Colonic mucosa (tissue), 4 donors: ENCODE measurements at regions of chr14 and their contacts with region 1.

Region 1: GRCh38 chr14:94354638-94355185 is 31.6 kb upstream of the SERPINA6 start:
- DNase-seq: no peak
- H3K4me3 ChIP-seq: no peak overlapping the region
- H3K27ac ChIP-seq: no peak overlapping the region
- H3K4me1 ChIP-seq: no peaks in the 10 kb centered on the region
- H3K27me3 ChIP-seq: no peaks in the 10 kb centered on the region
- CTCF ChIP-seq: no peak

Region 2: GRCh38 chr14:94412671-94413638 is 58.2 kb after region 1 on chr14:
- intact Hi-C with region 1: loop called (anchors 5 kb)
- DNase-seq: no peak
- H3K4me3 ChIP-seq: no peak overlapping the region
- H3K27ac ChIP-seq: no peak overlapping the region
- H3K4me1 ChIP-seq: peaks cover 3% of the 10 kb centered on the region
- H3K27me3 ChIP-seq: no peaks in the 10 kb centered on the region
- CTCF ChIP-seq: peak; percentile 26

Region 3: GRCh38 chr14:94485944-94486841 is 131.5 kb after region 1 on chr14:
- intact Hi-C with region 1: loop called (anchors 5 kb)
- DNase-seq: peak; percentile 28
- H3K4me3 ChIP-seq: no peak overlapping the region
- H3K27ac ChIP-seq: no peak overlapping the region
- H3K4me1 ChIP-seq: no peaks in the 10 kb centered on the region
- H3K27me3 ChIP-seq: no peaks in the 10 kb centered on the region
- CTCF ChIP-seq: peak; percentile 98